Naive thymus-derived CD4-positive, alpha-beta T cell (primary cell): ENCODE measurements at regions of chr2 and their contacts with region 1.

Region 1: DNA sequence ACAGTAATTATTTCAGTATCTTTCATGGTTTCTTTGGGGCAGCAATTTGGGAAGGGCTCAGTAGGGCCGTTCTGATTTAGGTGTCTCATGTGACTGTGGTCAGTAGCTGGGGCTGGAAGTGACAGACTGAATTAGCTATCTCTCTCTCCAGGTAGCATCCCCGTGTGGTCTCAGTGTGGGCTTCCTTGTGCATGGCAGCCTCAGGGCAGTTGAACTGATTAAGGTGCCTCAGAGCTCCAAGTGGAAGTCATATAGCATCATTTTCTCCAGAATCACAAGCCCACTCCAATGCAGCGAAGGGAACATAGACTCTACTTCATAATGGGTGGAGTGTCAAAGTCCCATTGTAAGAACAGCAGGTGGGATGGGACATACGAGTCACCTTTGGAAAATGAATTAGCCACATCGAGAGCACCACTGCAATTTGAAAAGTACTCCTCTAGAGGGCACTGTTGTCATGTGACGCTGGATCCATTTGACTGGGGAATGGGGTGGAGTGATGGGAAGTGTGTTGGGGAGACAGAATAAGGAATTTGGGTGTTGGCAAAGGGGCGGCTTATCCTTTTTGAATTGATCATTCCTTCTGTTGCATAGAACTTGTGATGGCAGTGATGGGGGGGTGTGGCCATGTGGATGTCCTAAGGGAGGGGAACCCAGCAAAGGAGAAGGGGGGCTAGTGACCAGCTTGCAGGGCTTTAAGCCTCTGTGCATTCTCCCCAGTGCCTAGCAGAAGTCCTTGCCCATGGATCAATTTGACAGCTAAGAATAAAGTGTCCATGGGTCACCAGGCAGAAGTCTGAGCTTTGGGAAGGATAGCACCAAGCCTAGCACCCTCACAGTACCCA is 39.3 kb upstream of the FAM136A start:
- DNase-seq: peak; percentile 11 to 64 (median 45)
- ATAC-seq: peak; percentile 80
- H3K4me3 ChIP-seq: no peak overlapping the region
- H3K4me3 Mint-ChIP-seq: peak overlapping the region in 1 of 10 donors; percentile 27
- H3K27ac ChIP-seq: no peak overlapping the region
- H3K27ac Mint-ChIP-seq: no peak overlapping the region
- H3K4me1 ChIP-seq: peaks cover 0 to 8% of the 10 kb centered on the region in 2 donors
- H3K4me1 Mint-ChIP-seq: peaks cover 0 to 13% (median 11%) of the 10 kb centered on the region in 7 donors
- H3K27me3 ChIP-seq: no peaks in the 10 kb centered on the region
- H3K27me3 Mint-ChIP-seq: peaks cover 0 to 26% (median 0%) of the 10 kb centered on the region in 5 donors

Region 2: GRCh38 chr2:70498054-70498453 is 156.9 kb after region 1 on chr2:
- CTCF ChIA-PET with region 1: interaction called, 3 read pairs
- POLR2A ChIA-PET with region 1: no interaction called
- intact Hi-C with region 1: loop called (anchors 10 kb)
- DNase-seq: peak in 1 of 9 donors; percentile 2
- ATAC-seq: peak; percentile 50
- H3K4me3 ChIP-seq: no peak overlapping the region
- H3K4me3 Mint-ChIP-seq: no peak overlapping the region
- H3K27ac ChIP-seq: no peak overlapping the region
- H3K27ac Mint-ChIP-seq: peak overlapping the region in 1 of 9 donors; percentile 16
- H3K4me1 ChIP-seq: no peaks in the 10 kb centered on the region
- H3K4me1 Mint-ChIP-seq: peaks cover 0 to 25% (median 5%) of the 10 kb centered on the region in 7 donors
- H3K27me3 ChIP-seq: no peaks in the 10 kb centered on the region
- H3K27me3 Mint-ChIP-seq: peaks cover 0 to 47% (median 0%) of the 10 kb centered on the region in 5 donors

Region 3: GRCh38 chr2:70647873-70648481 is 306.8 kb after region 1 on chr2:
- CTCF ChIA-PET with region 1: interaction called, 70 read pairs
- POLR2A ChIA-PET with region 1: no interaction called
- intact Hi-C with region 1: loop called (anchors 1 kb)
- DNase-seq: peak; percentile 55 to 81 (median 75)
- ATAC-seq: peak; percentile 85
- H3K4me3 ChIP-seq: no peak overlapping the region
- H3K4me3 Mint-ChIP-seq: no peak overlapping the region
- H3K27ac ChIP-seq: no peak overlapping the region
- H3K27ac Mint-ChIP-seq: peak overlapping the region in 1 of 9 donors; percentile 13
- H3K4me1 ChIP-seq: no peaks in the 10 kb centered on the region
- H3K4me1 Mint-ChIP-seq: no peaks in the 10 kb centered on the region
- H3K27me3 ChIP-seq: no peaks in the 10 kb centered on the region
- H3K27me3 Mint-ChIP-seq: peaks cover 0 to 30% (median 4%) of the 10 kb centered on the region in 5 donors